Activated B cell treated with CpG ODN at 0.5 μM for 24 hours (primary cell): ENCODE measurements at regions of chr17 and their contacts with region 1.

Region 1: DNA sequence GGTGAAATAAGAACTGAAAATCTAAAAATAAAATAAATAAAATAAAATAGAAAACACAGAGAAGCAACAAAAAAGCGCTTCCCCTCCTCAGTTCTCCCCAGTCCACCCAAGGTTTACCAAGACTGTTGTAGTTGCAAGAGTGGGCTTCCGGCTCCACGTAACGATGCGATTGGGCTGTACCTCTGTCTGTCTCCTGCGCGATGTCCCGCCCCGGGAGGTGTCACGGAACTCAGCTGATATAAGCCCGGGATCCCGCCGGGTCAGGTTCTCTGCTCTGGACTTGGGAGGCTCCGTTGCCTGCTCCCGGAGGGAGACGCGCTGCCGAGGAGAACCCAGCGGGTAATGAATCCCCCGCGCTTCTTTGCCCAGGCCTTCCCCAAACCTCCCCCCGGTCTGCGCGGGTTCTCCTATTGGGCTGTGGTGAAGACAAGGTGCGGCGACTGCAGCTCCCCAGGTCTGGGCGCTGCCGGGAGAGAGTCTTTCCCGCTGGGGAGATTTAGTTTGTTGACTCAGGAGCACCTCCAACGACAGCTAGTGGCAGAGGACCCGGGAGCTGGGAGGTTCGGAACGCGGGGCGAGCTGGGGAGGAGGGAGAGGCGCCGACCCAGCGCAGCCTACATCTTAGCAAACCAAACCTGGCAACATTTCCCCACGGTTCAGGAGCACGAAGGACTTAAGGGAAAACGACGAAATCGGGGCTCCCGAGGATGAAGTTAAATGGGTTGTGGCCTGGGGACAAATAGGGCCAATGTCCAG is at the start of gene SLFN5:
- DNase-seq: peak; percentile 88
- ATAC-seq: peak; percentile 84
- H3K4me3 Mint-ChIP-seq: peak within 1 kb of the TSS; percentile 97
- H3K27ac Mint-ChIP-seq: peak within 1 kb of the TSS; percentile 94
- H3K4me1 Mint-ChIP-seq: peaks cover 25% of the 10 kb centered on the region
- H3K27me3 Mint-ChIP-seq: no peaks in the 10 kb centered on the region
- CTCF ChIP-seq: no peak
- total RNA-seq, gene SLFN5: 15.2 and 15.3 TPM in 2 replicates

Region 2: DNA sequence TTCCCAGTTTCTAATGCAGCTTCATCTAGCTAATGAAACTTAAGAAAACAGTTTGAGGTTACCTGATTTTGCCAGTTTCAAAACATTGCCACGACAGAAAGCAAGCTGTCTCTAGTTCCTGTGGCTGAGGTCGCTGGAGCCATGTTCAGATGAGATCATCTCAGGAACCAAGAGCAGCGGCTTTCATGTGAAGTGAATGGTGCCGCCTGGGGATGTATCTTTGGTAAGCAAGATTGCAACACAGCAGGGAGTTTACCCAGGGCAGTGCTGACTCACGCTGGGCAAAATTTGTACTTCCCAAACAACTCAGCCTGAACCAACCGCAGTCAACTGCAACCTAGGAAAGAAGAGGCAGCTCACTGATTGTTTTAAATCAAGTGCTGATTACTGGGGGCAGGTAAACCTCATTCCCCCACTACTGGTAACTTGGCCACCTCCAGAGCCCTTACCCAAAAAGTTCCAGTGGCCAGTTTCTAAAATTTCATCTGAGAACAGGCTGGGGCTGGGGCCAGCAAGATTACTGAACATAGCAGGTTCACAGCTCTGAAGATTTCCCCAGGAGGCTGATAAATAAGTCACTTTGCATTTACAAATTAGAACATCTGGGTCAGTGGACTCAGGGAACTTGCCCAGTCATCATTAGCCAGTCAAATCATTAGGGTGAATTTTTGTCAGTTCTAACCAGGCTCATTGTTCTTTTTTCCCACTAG is 179.3 kb before region 1 on chr17 and contains the start of gene RFFL:
- CTCF ChIA-PET with region 1: no interaction called
- POLR2A ChIA-PET with region 1: no interaction called
- intact Hi-C with region 1: loop called (anchors 5 kb)
- DNase-seq: peak; percentile 54
- ATAC-seq: peak; percentile 96
- H3K4me3 Mint-ChIP-seq: peak within 1 kb of the TSS; percentile 79
- H3K27ac Mint-ChIP-seq: peak within 1 kb of the TSS; percentile 92
- H3K4me1 Mint-ChIP-seq: peaks cover 32% of the 10 kb centered on the region
- H3K27me3 Mint-ChIP-seq: no peaks in the 10 kb centered on the region
- CTCF ChIP-seq: no peak
- total RNA-seq, gene RFFL: 31.5 and 34.1 TPM in 2 replicates

Region 3: GRCh38 chr17:35345926-35346771 is 103.2 kb after region 1 on chr17:
- CTCF ChIA-PET with region 1: no interaction called
- POLR2A ChIA-PET with region 1: no interaction called
- intact Hi-C with region 1: loop called (anchors 1 kb)
- DNase-seq: no peak
- ATAC-seq: peak; percentile 74
- H3K4me3 Mint-ChIP-seq: peak overlapping the region; percentile 86
- H3K27ac Mint-ChIP-seq: peak overlapping the region; percentile 79
- H3K4me1 Mint-ChIP-seq: peaks cover 40% of the 10 kb centered on the region
- H3K27me3 Mint-ChIP-seq: no peaks in the 10 kb centered on the region
- CTCF ChIP-seq: no peak

Region 4: DNA sequence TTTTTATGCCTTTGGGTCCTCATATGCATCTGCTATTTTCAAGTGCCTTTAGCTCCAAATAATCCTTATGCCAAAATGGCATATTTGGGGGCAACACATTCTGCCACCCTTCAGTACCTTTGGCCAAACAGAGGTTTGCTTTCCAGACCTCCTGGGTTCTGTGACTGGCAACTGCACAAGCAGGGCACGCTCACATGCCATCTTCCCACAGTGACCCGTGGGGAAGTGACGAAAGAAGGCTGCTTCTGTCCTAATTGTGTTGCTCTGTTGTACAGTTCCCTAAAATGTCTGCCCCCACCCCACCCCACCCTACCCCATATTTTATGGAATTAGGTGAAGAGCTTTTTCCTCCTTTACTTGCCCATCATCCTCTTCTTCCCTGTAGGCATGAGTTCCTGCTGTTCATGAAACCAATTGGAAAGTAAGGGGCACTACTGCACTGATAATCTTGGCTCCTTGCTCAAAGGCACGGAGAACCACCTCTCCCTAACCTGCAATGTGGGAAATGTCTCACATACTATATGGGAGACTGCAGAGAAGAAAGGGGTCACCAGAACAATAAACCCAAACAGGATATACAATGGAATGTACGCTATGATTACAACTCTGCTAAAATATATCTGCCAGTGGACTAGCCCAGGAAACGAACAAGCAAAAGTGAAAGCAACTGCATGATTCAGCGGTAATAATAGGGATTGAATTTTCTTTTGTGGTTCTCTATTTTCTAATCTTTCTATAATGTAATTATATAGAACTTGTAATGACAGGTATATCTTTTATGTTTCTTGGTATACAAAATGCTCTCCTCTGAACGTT is 297.8 kb after region 1 on chr17:
- CTCF ChIA-PET with region 1: interaction called, 3 read pairs
- POLR2A ChIA-PET with region 1: interaction called, 8 read pairs
- intact Hi-C with region 1: loop called (anchors 1 kb)
- DNase-seq: peak; percentile 26
- ATAC-seq: peak; percentile 83
- H3K4me3 Mint-ChIP-seq: peak overlapping the region; percentile 88
- H3K27ac Mint-ChIP-seq: peak overlapping the region; percentile 92
- H3K4me1 Mint-ChIP-seq: peaks cover 43% of the 10 kb centered on the region
- H3K27me3 Mint-ChIP-seq: no peaks in the 10 kb centered on the region
- CTCF ChIP-seq: no peak

Region 5: GRCh38 chr17:35764123-35764991 is 521.4 kb after region 1 on chr17:
- CTCF ChIA-PET with region 1: no interaction called
- POLR2A ChIA-PET with region 1: no interaction called
- intact Hi-C with region 1: loop called (anchors 5 kb)
- DNase-seq: peak; percentile 89
- ATAC-seq: peak; percentile 93
- H3K4me3 Mint-ChIP-seq: peak overlapping the region; percentile 91
- H3K27ac Mint-ChIP-seq: peak overlapping the region; percentile 75
- H3K4me1 Mint-ChIP-seq: peaks cover 9% of the 10 kb centered on the region
- H3K27me3 Mint-ChIP-seq: peaks cover 4% of the 10 kb centered on the region
- CTCF ChIP-seq: peak; percentile 77